Cardiac septum (tissue), 1 donor: ENCODE measurements at regions of chr1 and their contacts with region 1.

Region 1: GRCh38 chr1:212368073-212368484 is 46.6 kb downstream of the PACC1 start:
- DNase-seq: no peak

Region 2: DNA sequence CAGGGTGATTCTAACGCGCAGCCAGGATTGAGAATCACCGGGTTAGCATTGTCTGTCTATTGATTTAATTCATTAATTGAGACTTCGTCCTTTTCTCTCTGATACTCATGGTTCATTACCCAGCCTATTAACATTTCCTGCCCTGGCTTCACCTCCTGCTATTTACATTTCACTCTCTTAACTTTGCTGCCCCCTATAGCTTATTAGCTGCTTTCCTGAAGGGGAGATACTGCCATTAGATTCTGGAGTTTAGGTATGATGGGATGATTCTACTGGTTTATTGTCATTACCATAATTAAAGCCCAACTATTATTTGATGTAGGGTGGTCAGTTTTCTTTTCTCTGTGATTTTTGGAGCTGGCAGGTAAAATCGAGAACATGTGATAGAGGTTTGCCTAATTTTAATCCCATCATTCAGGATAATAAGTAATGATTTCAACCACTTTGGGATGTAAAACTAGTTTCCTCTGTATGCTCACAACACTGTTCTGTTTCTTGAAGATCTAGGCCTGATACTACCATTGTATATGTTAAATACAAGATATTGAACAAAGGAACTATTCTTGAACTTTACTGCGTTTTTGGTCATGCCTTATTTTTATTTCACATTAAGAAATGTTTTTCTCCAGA is 76.5 kb before region 1 on chr1:
- intact Hi-C with region 1: loop called (anchors 5 kb)
- DNase-seq: no peak